CD8-positive, alpha-beta memory T cell (primary cell): ENCODE measurements at regions of chr9 and their contacts with region 1.

Region 1: GRCh38 chr9:137029058-137029936 is 1.3 kb upstream of the ABCA2 start:
- DNase-seq: peak; percentile 58 to 76 (median 60)
- H3K4me3 ChIP-seq: peak overlapping the region; percentile 74
- H3K4me3 Mint-ChIP-seq: peak overlapping the region; percentile 82 to 95 (median 88)
- H3K27ac ChIP-seq: peak overlapping the region; percentile 61
- H3K27ac Mint-ChIP-seq: peak overlapping the region; percentile 58 to 96 (median 90)
- H3K4me1 ChIP-seq: peaks cover 55% of the 10 kb centered on the region
- H3K4me1 Mint-ChIP-seq: peaks cover 43 to 73% (median 44%) of the 10 kb centered on the region in 3 donors
- H3K27me3 ChIP-seq: no peaks in the 10 kb centered on the region
- H3K27me3 Mint-ChIP-seq: no peaks in the 10 kb centered on the region

Region 2: DNA sequence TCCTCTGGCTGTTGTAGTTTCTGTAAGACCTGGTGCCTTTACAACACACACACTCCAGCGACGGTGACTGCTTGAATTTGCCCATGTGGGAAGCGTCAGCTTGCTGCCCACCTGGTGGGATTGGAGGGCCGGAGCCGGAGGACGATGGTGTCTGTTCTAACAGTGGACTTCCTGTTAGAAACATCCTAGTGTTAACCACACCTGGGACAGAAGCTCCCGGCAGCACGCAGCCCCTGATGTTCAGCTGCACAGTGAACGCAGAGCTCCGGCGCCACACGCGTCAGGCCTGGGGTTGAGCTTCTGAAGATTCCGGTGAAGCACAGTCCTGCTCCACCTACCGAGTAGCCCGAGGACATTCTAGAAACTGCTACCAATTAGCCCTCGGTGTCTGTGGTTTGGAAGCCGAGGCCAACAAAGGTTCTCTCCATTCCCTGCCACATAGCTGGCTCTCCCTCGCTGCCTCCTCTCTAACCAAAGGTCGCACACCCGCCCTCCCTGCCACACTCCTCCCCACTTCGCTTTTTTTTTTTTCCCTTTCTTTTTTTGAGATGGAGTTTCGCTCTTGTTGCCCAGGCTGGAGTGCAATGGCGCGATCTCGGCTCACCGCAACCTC is 604.4 kb before region 1 on chr9:
- CTCF ChIA-PET with region 1: no interaction called
- POLR2A ChIA-PET with region 1: no interaction called
- DNase-seq: no peak
- H3K4me3 ChIP-seq: no peak overlapping the region
- H3K4me3 Mint-ChIP-seq: no peak overlapping the region
- H3K27ac ChIP-seq: no peak overlapping the region
- H3K27ac Mint-ChIP-seq: no peak overlapping the region
- H3K4me1 ChIP-seq: no peaks in the 10 kb centered on the region
- H3K4me1 Mint-ChIP-seq: no peaks in the 10 kb centered on the region
- H3K27me3 ChIP-seq: no peaks in the 10 kb centered on the region
- H3K27me3 Mint-ChIP-seq: no peaks in the 10 kb centered on the region

Region 3: DNA sequence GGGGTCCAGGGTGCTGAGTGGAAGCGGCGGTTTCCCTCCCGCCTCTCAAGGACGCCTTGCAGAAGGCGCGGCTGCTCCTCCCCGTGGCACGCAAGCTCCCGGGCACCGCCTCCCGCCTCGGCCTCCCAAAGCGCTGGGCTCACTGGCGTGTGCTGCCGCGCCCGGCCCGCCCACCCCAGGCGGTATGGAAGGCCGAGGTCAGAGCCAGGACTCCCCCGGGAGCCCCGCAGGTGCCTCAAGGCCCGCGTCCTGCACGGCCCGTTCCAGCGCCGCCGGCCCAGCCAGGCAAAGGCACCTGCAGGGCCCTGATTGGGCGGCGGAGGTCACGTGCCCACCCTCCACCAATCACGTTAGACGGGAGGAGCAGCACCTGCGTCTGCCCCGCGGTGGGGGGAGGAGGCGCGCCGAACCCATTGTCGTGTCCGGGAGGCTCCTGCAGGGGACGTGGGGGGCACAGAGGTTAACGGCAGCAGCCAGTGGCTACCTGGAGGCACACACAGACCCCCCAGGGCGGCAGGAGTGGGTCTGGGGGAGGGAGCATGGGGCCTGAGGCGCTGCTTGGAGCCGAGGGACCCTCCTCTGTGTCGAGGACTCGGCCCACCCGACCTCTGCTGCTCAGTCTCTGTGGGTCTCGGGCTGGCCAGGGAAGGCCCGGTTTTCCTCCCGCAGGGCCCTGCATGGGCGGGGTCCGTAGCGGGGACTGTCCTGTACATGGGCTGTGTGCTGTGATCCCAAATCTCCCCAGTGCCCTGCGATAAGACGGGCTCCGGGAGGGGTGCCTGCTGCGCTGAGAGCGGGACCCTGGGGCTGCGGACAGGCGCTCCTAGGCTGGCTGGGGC is 79.3 kb before region 1 on chr9:
- CTCF ChIA-PET with region 1: interaction called, 159 read pairs
- POLR2A ChIA-PET with region 1: interaction called, 7 read pairs
- DNase-seq: peak; percentile 93 to 98 (median 97)
- H3K4me3 ChIP-seq: peak overlapping the region; percentile 77
- H3K4me3 Mint-ChIP-seq: peak overlapping the region; percentile 81 to 92 (median 87)
- H3K27ac ChIP-seq: peak overlapping the region; percentile 78
- H3K27ac Mint-ChIP-seq: peak overlapping the region; percentile 80 to 94 (median 86)
- H3K4me1 ChIP-seq: peaks cover 14% of the 10 kb centered on the region
- H3K4me1 Mint-ChIP-seq: peaks cover 0 to 34% (median 7%) of the 10 kb centered on the region in 3 donors
- H3K27me3 ChIP-seq: no peaks in the 10 kb centered on the region
- H3K27me3 Mint-ChIP-seq: no peaks in the 10 kb centered on the region

Region 4: DNA sequence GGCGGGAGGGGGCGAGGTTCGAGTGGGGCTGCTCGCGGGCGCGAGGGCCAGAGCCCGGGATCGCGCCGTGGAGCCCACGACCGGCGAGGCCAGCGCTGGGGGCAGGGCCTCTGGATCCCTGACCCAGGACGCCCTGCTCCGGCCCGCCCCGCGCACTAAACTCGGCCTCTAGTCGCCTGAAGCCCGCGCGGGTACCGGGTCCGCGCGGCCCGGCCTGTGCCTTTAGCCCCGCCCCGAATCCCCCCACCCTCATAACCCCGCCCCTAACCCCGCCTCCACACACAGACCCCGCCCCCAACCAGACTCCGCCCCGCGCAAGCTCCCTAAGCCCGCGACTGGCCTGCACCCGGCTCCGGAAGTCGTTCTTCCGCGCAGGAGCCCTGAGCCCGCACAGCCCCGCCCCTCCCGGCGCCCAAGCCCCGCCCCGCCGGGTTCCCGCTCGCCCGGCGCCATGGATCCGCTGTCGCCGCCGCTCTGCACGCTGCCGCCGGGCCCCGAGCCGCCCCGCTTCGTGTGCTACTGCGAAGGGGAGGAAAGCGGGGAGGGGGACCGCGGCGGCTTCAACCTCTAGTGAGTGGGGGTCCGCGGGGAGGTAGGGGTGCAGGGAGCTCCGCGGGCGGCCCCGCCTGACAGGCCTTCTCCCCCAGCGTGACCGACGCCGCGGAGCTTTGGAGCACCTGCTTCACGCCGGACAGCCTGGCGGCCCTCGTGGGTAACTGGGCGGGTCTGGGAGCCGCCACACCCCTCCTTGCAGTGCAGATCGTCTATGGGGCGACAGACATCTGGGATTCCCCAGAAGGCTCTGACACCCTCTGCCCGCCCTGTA is 37.1 kb before region 1 on chr9 and contains the start of gene PAXX:
- CTCF ChIA-PET with region 1: interaction called, 72 read pairs
- POLR2A ChIA-PET with region 1: interaction called, 6 read pairs
- DNase-seq: peak; percentile 91 to 95 (median 92)
- H3K4me3 ChIP-seq: peak within 1 kb of the TSS; percentile 65
- H3K4me3 Mint-ChIP-seq: peak within 1 kb of the TSS; percentile 84 to 95 (median 87)
- H3K27ac ChIP-seq: peak within 1 kb of the TSS; percentile 83
- H3K27ac Mint-ChIP-seq: peak within 1 kb of the TSS; percentile 92 to 98 (median 96)
- H3K4me1 ChIP-seq: peaks cover 28% of the 10 kb centered on the region
- H3K4me1 Mint-ChIP-seq: peaks cover 19 to 50% (median 22%) of the 10 kb centered on the region in 3 donors
- H3K27me3 ChIP-seq: no peaks in the 10 kb centered on the region
- H3K27me3 Mint-ChIP-seq: peaks cover 2 to 3% of the 10 kb centered on the region in 2 donors
- total RNA-seq, gene PAXX: 78.4 to 82.2 TPM

Region 5: GRCh38 chr9:137006116-137007003 is 22.9 kb before region 1 on chr9:
- CTCF ChIA-PET with region 1: interaction called, 26 read pairs
- POLR2A ChIA-PET with region 1: no interaction called
- DNase-seq: no peak
- H3K4me3 ChIP-seq: no peak overlapping the region
- H3K4me3 Mint-ChIP-seq: peak overlapping the region in 5 of 7 donors; percentile 19 to 55 (median 28)
- H3K27ac ChIP-seq: no peak overlapping the region
- H3K27ac Mint-ChIP-seq: peak overlapping the region in 5 of 8 donors; percentile 17 to 90 (median 46)
- H3K4me1 ChIP-seq: no peaks in the 10 kb centered on the region
- H3K4me1 Mint-ChIP-seq: peaks cover 10 to 17% (median 15%) of the 10 kb centered on the region in 3 donors
- H3K27me3 ChIP-seq: no peaks in the 10 kb centered on the region
- H3K27me3 Mint-ChIP-seq: no peaks in the 10 kb centered on the region

Region 6: GRCh38 chr9:137064027-137064879 is 35.0 kb after region 1 on chr9:
- CTCF ChIA-PET with region 1: interaction called, 31 read pairs
- POLR2A ChIA-PET with region 1: no interaction called
- DNase-seq: peak in 3 of 5 donors; percentile 38 to 50 (median 49)
- H3K4me3 ChIP-seq: no peak overlapping the region
- H3K4me3 Mint-ChIP-seq: no peak overlapping the region
- H3K27ac ChIP-seq: no peak overlapping the region
- H3K27ac Mint-ChIP-seq: peak overlapping the region in 1 of 8 donors; percentile 37
- H3K4me1 ChIP-seq: peaks cover 2% of the 10 kb centered on the region
- H3K4me1 Mint-ChIP-seq: peaks cover 6 to 10% (median 7%) of the 10 kb centered on the region in 3 donors
- H3K27me3 ChIP-seq: no peaks in the 10 kb centered on the region
- H3K27me3 Mint-ChIP-seq: peaks cover 3 to 4% of the 10 kb centered on the region in 2 donors

Region 7: GRCh38 chr9:137086531-137087408 is 57.5 kb after region 1 on chr9 and contains the start of gene MAN1B1:
- CTCF ChIA-PET with region 1: interaction called, 14 read pairs
- POLR2A ChIA-PET with region 1: no interaction called
- DNase-seq: peak; percentile 99 to 100 (median 99)
- H3K4me3 ChIP-seq: peak within 1 kb of the TSS; percentile 88
- H3K4me3 Mint-ChIP-seq: peak within 1 kb of the TSS; percentile 86 to 93 (median 89)
- H3K27ac ChIP-seq: peak within 1 kb of the TSS; percentile 86
- H3K27ac Mint-ChIP-seq: peak within 1 kb of the TSS; percentile 86 to 99 (median 96)
- H3K4me1 ChIP-seq: peaks cover 19% of the 10 kb centered on the region
- H3K4me1 Mint-ChIP-seq: peaks cover 21 to 41% (median 23%) of the 10 kb centered on the region in 3 donors
- H3K27me3 ChIP-seq: no peaks in the 10 kb centered on the region
- H3K27me3 Mint-ChIP-seq: no peaks in the 10 kb centered on the region
- total RNA-seq, gene MAN1B1: 31.9 to 32.7 TPM

Region 8: DNA sequence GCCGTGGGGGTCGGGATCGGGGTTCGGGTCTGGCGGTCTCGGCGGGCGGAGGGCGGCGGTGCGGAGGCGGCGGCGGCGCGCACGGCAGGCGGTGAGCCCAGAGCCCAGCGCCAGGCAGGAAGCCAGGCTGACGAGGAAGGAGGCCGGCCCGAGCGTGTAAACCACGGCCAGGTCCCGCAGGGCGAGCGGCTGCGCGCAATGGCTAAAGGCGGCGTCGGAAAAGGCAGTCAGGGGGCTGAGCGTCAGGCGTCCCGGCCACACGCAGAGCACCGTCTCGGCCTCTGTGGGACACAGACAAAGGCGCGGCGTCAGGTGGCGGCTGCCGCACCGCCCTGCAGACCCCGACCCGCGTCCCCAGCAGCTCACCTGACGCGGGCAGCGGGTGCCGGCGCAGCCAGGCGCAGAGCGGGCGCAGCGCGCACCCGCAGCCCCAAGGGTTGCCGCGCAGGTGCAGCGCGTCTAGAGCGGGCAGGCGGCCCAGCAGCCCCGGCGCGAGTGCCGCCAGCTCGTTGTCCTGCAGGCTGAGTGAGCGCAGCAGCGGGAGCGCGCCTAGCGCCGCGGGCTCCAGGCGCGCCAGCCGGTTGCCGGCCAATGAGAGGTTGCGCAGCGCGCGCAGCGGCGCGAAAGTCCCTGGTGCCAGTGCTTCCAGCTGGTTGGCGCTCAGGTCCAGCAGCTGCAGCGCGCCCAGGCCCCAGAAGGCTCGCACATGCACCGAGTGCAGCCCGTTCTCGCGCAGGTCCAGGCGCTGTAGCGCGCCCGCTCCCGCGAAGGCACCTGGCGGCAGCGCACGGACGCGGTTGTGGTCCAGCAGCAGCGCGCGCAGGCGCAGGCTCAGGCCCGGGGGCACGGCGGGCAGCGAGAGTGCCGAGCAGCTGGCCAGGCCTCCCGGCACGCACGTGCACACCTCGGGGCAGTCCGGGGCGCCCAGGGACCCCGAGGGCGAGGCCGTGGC is 139.9 kb after region 1 on chr9:
- CTCF ChIA-PET with region 1: no interaction called
- POLR2A ChIA-PET with region 1: no interaction called
- DNase-seq: no peak
- H3K4me3 ChIP-seq: no peak overlapping the region
- H3K4me3 Mint-ChIP-seq: peak overlapping the region; percentile 24 to 78 (median 57)
- H3K27ac ChIP-seq: no peak overlapping the region
- H3K27ac Mint-ChIP-seq: no peak overlapping the region
- H3K4me1 ChIP-seq: no peaks in the 10 kb centered on the region
- H3K4me1 Mint-ChIP-seq: peaks cover 0 to 11% (median 0%) of the 10 kb centered on the region in 3 donors
- H3K27me3 ChIP-seq: peaks cover 32% of the 10 kb centered on the region
- H3K27me3 Mint-ChIP-seq: peaks cover 16 to 24% of the 10 kb centered on the region in 2 donors

Region 9: GRCh38 chr9:137212520-137212919 is 183.2 kb after region 1 on chr9:
- CTCF ChIA-PET with region 1: no interaction called
- POLR2A ChIA-PET with region 1: no interaction called
- DNase-seq: no peak
- H3K4me3 ChIP-seq: no peak overlapping the region
- H3K4me3 Mint-ChIP-seq: no peak overlapping the region
- H3K27ac ChIP-seq: no peak overlapping the region
- H3K27ac Mint-ChIP-seq: no peak overlapping the region
- H3K4me1 ChIP-seq: no peaks in the 10 kb centered on the region
- H3K4me1 Mint-ChIP-seq: peaks cover 2 to 3% (median 2%) of the 10 kb centered on the region in 3 donors
- H3K27me3 ChIP-seq: no peaks in the 10 kb centered on the region
- H3K27me3 Mint-ChIP-seq: no peaks in the 10 kb centered on the region

Region 10: DNA sequence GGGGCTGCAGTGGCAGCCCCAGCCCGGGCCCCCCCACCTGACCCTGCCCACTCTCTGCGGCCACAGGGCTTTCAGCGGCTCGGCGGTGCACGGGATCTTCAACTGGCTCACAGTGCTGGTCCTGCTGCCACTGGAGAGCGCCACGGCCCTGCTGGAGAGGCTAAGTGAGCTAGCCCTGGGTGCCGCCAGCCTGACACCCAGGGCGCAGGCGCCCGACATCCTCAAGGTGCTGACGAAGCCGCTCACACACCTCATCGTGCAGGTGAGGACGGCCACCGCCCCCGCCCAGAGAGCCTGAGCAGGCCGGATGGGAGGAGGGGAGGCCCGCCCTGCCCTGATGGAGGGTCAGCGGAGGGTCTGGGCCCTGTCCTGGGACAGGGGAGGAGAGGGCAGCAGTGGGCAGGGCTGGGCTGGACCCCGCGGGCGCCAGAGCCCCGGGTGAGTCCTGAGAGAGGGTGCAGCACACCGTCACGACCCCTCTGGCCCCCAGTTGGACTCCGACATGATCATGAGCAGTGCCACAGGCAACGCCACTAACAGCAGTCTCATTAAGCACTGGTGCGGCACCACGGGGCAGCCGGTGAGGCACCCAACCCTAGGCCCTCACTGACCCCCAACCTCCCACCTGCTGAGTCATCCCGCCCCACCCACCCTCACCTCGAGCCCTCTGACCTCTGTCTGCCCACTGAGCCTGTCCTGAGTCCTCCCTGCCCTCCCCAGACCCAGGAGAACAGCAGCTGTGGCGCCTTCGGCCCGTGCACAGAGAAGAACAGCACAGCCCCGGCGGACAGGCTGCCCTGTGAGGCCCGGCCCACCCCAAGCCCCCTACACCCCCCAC is 204.1 kb after region 1 on chr9:
- CTCF ChIA-PET with region 1: no interaction called
- POLR2A ChIA-PET with region 1: no interaction called
- DNase-seq: no peak
- H3K4me3 ChIP-seq: no peak overlapping the region
- H3K4me3 Mint-ChIP-seq: no peak overlapping the region
- H3K27ac ChIP-seq: no peak overlapping the region
- H3K27ac Mint-ChIP-seq: no peak overlapping the region
- H3K4me1 ChIP-seq: peaks cover 12% of the 10 kb centered on the region
- H3K4me1 Mint-ChIP-seq: peaks cover 0 to 13% (median 1%) of the 10 kb centered on the region in 3 donors
- H3K27me3 ChIP-seq: no peaks in the 10 kb centered on the region
- H3K27me3 Mint-ChIP-seq: peaks cover 0 to 11% of the 10 kb centered on the region in 2 donors